ENCODE measurements at regions of chr1 and their contacts with region 1.

Region 1: DNA sequence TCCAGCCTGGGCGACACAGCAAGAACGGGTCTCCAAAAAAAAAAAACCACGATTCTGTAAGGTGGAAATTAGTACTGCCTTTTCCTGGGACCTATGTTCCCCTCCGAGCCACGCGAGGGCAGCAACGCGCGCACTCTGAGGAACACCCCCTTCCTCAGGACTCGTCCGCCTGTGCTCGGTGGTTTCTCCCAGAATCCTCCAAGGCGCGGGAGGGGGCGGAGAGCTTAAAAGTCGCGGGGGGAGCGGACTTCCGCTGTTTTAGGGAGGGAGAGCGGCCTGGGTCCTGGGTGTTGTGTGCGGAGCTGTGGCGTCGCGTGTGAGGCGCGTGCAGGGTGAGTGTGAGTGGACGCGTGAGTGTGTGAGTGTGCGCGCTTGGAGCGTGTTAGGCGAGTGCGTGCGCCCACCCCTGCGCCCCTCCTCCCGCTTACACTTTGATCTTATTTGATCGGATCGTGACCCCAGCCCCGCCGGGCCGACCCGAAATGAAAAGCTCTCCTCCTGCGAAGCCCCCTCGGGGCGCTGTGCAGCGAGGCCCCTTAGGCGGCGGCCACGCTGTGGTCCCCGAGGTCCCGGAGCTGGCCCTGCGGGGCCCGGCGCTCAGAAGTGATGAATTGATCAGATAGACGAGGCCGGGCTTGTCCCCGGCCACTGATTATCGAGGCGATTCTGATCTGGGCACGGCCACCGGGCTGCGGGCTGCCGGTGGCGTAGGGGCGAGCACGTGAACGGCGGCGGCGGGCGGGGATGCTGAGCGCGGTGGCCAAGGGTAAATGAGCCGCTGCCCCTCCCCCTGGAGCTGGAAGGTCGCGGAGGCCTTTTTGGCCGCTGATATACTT is 9.6 kb downstream of the TMEM167B start:
- DNase-seq: peak; percentile 99
- H3K4me3 ChIP-seq: peak overlapping the region; percentile 66 to 97 (median 87)
- H3K27ac ChIP-seq: peak overlapping the region; percentile 90 to 99 (median 95)
- H3K4me1 ChIP-seq: peaks cover 0 to 22% (median 15%) of the 10 kb centered on the region in 4 donors
- H3K27me3 ChIP-seq: no peaks in the 10 kb centered on the region
- CTCF ChIP-seq: peak; percentile 73 to 88 (median 78)
- EP300 ChIP-seq: peak in 1 of 4 donors; percentile 68
- POLR2A ChIP-seq: peak; percentile 97 to 98

Region 2: GRCh38 chr1:109041621-109042468 is 58.3 kb before region 1 on chr1 and contains the start of gene WDR47:
- intact Hi-C with region 1: loop called (anchors 5 kb)
- DNase-seq: peak; percentile 97
- H3K4me3 ChIP-seq: peak within 1 kb of the TSS; percentile 81 to 100 (median 99)
- H3K27ac ChIP-seq: peak within 1 kb of the TSS; percentile 87 to 93 (median 91)
- H3K4me1 ChIP-seq: peaks cover 0 to 18% (median 13%) of the 10 kb centered on the region in 4 donors
- H3K27me3 ChIP-seq: no peaks in the 10 kb centered on the region
- CTCF ChIP-seq: no peak
- EP300 ChIP-seq: no peak
- POLR2A ChIP-seq: peak; percentile 85 to 91
- total RNA-seq, gene WDR47: 16.0 to 34.3 (median 24.0) TPM

Region 3: DNA sequence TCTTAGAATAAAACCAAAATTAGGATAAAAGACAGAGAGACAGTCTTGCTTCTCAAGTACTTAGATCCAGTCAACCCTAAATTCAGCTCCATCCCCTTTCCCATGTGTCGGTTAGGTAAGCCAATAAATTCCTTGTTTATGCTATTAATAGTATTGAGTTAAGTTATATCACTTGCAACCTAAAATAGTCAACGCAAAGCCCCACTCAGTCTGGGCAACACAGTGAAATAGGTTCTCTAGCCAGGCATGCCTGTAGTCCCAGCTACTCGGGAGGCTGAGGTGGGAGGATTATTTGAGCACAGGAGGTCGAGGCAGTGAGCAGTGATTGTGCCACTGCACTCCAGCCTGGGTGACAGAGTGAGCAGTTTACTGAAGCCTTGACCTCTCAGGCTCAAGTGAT is 39.0 kb before region 1 on chr1:
- intact Hi-C with region 1: no loop called
- DNase-seq: no peak
- H3K4me3 ChIP-seq: no peak overlapping the region
- H3K27ac ChIP-seq: no peak overlapping the region
- H3K4me1 ChIP-seq: no peaks in the 10 kb centered on the region
- H3K27me3 ChIP-seq: no peaks in the 10 kb centered on the region
- CTCF ChIP-seq: no peak
- EP300 ChIP-seq: no peak
- POLR2A ChIP-seq: no peak

Region 4: DNA sequence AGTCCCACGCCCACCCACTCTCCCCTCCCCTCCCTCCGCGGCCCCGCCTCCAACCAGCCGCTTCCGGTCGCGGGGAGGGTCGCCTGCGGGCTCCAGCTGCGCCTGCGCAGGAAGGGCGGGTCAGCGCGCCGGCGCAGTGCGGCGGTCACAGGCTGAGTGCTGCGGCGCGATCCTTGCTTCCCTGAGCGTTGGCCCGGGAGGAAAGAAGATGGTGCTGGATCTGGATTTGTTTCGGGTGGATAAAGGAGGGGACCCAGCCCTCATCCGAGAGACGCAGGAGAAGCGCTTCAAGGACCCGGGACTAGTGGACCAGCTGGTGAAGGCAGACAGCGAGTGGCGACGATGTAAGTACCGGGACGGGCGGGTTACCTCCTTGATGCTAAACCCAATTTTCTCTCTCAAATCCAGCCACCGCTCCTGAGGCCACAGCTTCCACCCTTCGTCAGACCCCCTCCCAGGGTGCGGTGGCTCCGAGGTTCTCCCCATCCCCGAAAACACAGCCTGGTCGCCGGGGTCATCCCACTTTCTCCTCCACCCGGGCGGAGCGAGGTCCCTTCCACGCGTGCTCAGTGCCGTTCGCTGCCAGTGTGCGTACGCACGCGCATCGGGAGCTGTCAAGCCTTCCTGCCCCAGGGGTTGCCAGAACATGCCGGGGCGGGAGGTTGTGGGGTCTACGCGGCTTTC is 113.8 kb after region 1 on chr1 and contains the start of gene SARS1:
- intact Hi-C with region 1: loop called (anchors 2 kb)
- DNase-seq: peak; percentile 92
- H3K4me3 ChIP-seq: peak within 1 kb of the TSS; percentile 78 to 89 (median 86)
- H3K27ac ChIP-seq: peak within 1 kb of the TSS; percentile 90 to 95 (median 94)
- H3K4me1 ChIP-seq: peaks cover 0 to 29% (median 25%) of the 10 kb centered on the region in 4 donors
- H3K27me3 ChIP-seq: no peaks in the 10 kb centered on the region
- CTCF ChIP-seq: no peak
- EP300 ChIP-seq: no peak
- POLR2A ChIP-seq: peak; percentile 87 to 90
- total RNA-seq, gene SARS1: 106 to 160 (median 148) TPM

Region 5: GRCh38 chr1:109312978-109313775 is 213.0 kb after region 1 on chr1:
- intact Hi-C with region 1: no loop called
- DNase-seq: peak; percentile 62
- H3K4me3 ChIP-seq: no peak overlapping the region
- H3K27ac ChIP-seq: no peak overlapping the region
- H3K4me1 ChIP-seq: no peaks in the 10 kb centered on the region
- H3K27me3 ChIP-seq: no peaks in the 10 kb centered on the region
- CTCF ChIP-seq: no peak
- EP300 ChIP-seq: no peak
- POLR2A ChIP-seq: no peak

Measured in sigmoid colon (tissue), 7 donors.